ENCODE measurements at regions of chr2 and their contacts with region 1.

Region 1: GRCh38 chr2:64114063-64114911 is 29.9 kb downstream of the PELI1 start:
- DNase-seq: peak; percentile 20
- H3K4me3 ChIP-seq: no peak overlapping the region
- H3K27ac ChIP-seq: no peak overlapping the region
- H3K27me3 ChIP-seq: no peaks in the 10 kb centered on the region
- CTCF ChIP-seq: no peak

Region 2: DNA sequence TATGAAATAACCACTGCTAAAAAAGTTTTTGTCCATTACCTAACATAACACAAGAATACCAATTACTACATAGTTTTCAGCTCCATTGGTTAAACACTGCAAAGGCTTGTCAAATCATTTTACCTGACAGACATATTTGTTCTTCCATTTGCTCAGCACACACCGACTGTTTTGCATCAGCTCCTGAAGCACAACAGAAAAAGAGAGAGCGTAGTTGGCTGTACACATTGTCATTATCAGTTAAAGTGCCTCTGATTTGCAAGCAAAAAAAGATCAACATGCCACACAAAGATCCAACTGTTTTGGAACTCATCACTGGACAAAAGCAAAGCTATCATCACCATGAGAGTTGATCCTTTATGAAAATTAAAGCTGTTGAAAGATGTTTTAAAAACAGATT is 629.8 kb before region 1 on chr2:
- CTCF ChIA-PET with region 1: no interaction called
- POLR2A ChIA-PET with region 1: no interaction called
- DNase-seq: no peak
- H3K4me3 ChIP-seq: no peak overlapping the region
- H3K27ac ChIP-seq: no peak overlapping the region
- H3K27me3 ChIP-seq: no peaks in the 10 kb centered on the region
- CTCF ChIP-seq: no peak

Region 3: GRCh38 chr2:64018923-64019718 is 95.2 kb before region 1 on chr2 and contains the start of gene VPS54:
- CTCF ChIA-PET with region 1: interaction called, 12 read pairs
- POLR2A ChIA-PET with region 1: no interaction called
- DNase-seq: no peak
- H3K4me3 ChIP-seq: peak within 1 kb of the TSS; percentile 72
- H3K27ac ChIP-seq: peak within 1 kb of the TSS; percentile 85
- H3K27me3 ChIP-seq: no peaks in the 10 kb centered on the region
- CTCF ChIP-seq: no peak
- polyA plus RNA-seq, gene VPS54: 16.1 and 21.9 TPM in 2 replicates

Region 4: GRCh38 chr2:64128943-64129391 is 14.7 kb after region 1 on chr2:
- CTCF ChIA-PET with region 1: no interaction called
- POLR2A ChIA-PET with region 1: no interaction called
- DNase-seq: no peak
- H3K4me3 ChIP-seq: no peak overlapping the region
- H3K27ac ChIP-seq: no peak overlapping the region
- H3K27me3 ChIP-seq: no peaks in the 10 kb centered on the region
- CTCF ChIP-seq: no peak